GM12878 (cell line): ENCODE measurements at regions of chr5 and their contacts with region 1.

Region 1: DNA sequence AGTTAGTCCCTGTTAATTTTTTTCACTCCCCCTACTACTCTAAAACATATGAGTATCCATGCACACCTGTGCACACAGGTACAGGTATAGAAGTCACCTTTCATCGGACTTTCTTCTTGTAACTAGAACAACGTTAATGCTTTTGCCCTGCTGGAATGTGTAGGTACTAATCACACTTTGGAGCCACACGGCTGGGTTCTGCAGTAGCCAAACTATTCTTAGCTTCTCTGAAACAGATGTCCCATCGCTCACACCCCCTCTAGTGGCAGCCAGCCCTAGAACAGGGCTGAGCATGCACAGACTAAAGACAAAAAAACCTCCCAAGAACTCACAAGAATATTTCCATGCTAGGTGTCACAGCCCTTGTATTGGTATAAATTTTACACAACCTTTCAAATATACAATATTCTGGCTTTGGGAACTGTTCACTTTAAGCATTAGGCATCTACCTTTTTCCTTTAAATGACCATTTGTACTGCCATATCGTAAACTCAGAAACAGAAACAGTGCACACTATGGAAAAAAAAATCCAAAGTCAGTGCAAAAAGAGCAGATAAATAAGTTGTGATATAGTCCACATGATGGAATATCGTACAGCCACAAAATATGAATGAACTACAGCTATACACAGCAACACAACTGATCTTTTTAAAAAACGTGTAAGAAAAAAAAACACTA is 64.0 kb downstream of the RETREG1 start:
- DNase-seq: no peak
- ATAC-seq: peak; percentile 89
- H3K4me3 ChIP-seq: no peak overlapping the region
- H3K27ac ChIP-seq: no peak overlapping the region
- H3K4me1 ChIP-seq: no peaks in the 10 kb centered on the region
- H3K27me3 ChIP-seq: no peaks in the 10 kb centered on the region
- CTCF ChIP-seq: peak; percentile 67 to 90 (median 81)
- EP300 ChIP-seq: no peak
- POLR2A ChIP-seq: no peak
- RAD21 ChIP-seq: peak; percentile 51

Region 2: DNA sequence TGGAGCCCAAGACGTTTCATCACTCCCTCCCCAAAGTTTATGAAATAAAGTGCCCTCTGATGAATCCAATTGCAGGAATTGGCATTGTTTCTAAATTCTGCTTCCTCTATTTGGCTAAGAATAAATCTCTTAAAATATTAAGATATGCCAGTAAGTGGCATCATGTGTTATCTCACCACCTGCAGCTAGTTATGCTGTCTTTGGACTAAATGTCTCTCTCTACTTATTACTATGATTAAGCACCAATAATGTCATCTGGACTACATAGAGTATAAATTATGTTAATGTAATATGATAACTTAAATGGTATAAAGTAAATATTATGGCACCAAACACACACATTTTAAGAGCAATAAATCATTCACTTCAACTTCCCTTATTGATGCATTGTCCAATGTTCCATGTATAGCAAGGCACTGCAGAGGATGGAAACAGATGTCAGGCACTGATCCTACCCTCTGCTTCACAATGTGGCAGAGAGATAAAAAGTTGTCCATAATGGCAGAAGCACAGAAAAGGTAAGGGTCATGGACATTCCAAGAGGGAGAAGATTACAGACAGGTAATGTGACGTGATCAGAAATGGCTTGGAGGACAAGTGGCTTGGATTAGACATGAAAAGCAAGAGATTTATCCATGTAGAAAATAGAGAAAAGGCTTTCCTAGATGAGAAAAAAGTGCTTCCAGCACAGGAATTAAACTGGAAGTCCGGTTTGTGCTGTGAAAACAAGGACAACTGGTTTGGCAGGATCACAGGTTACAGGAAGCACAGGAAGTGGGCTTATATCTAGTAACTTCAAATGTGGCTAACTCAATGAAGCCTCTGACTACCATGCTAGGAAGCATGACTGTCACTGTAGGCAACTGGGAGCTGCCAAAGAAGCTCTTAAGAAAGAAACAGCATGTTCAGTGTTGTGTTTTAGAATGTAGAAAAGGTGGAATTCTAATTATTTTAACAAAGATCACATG is 399.9 kb before region 1 on chr5:
- CTCF ChIA-PET with region 1: interaction called, 3 read pairs
- POLR2A ChIA-PET with region 1: no interaction called
- RAD21 ChIA-PET with region 1: no interaction called
- SMC1A ChIA-PET with region 1: no interaction called
- in situ Hi-C with region 1: loop called (anchors 10 kb)
- intact Hi-C with region 1: no loop called
- DNase-seq: no peak
- ATAC-seq: no peak
- H3K4me3 ChIP-seq: no peak overlapping the region
- H3K27ac ChIP-seq: no peak overlapping the region
- H3K4me1 ChIP-seq: no peaks in the 10 kb centered on the region
- H3K27me3 ChIP-seq: no peaks in the 10 kb centered on the region
- CTCF ChIP-seq: no peak
- EP300 ChIP-seq: no peak
- POLR2A ChIP-seq: no peak
- RAD21 ChIP-seq: no peak

Region 3: DNA sequence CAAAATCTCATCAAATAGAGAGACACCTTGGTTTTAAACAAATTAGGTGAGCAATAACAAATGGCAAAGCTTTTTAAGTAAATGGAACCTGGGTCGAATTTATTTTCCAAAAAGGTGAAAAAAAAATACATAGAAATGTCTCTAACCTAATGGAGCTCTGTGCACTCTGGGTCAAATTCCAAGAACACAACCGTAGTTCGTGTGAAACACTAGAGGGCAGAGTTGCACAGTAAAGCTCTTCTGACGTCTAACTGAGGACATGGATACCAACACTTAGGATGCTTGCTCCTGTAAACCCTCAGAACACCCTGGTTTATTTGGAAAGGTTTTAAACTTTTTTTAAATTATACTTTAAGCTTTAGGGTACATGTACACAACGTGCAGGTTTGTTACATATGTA is 392.1 kb before region 1 on chr5:
- CTCF ChIA-PET with region 1: interaction called, 55 read pairs
- POLR2A ChIA-PET with region 1: no interaction called
- RAD21 ChIA-PET with region 1: interaction called, 17 read pairs
- SMC1A ChIA-PET with region 1: interaction called, 8 read pairs
- in situ Hi-C with region 1: loop called (anchors 10 kb)
- intact Hi-C with region 1: loop called (anchors 1 kb)
- DNase-seq: peak; percentile 2
- ATAC-seq: peak; percentile 96
- H3K4me3 ChIP-seq: no peak overlapping the region
- H3K27ac ChIP-seq: no peak overlapping the region
- H3K4me1 ChIP-seq: no peaks in the 10 kb centered on the region
- H3K27me3 ChIP-seq: no peaks in the 10 kb centered on the region
- CTCF ChIP-seq: peak; percentile 66 to 70 (median 68)
- EP300 ChIP-seq: no peak
- POLR2A ChIP-seq: no peak
- RAD21 ChIP-seq: peak; percentile 83

Region 4: GRCh38 chr5:16392718-16393117 is 160.1 kb before region 1 on chr5:
- CTCF ChIA-PET with region 1: no interaction called
- POLR2A ChIA-PET with region 1: no interaction called
- RAD21 ChIA-PET with region 1: no interaction called
- SMC1A ChIA-PET with region 1: no interaction called
- in situ Hi-C with region 1: no loop called
- intact Hi-C with region 1: no loop called
- DNase-seq: no peak
- ATAC-seq: no peak
- H3K4me3 ChIP-seq: no peak overlapping the region
- H3K27ac ChIP-seq: no peak overlapping the region
- H3K4me1 ChIP-seq: no peaks in the 10 kb centered on the region
- H3K27me3 ChIP-seq: no peaks in the 10 kb centered on the region
- CTCF ChIP-seq: no peak
- EP300 ChIP-seq: no peak
- POLR2A ChIP-seq: no peak
- RAD21 ChIP-seq: no peak

Region 5: GRCh38 chr5:16489322-16489791 is 63.4 kb before region 1 on chr5:
- CTCF ChIA-PET with region 1: interaction called, 17 read pairs
- POLR2A ChIA-PET with region 1: no interaction called
- RAD21 ChIA-PET with region 1: no interaction called
- SMC1A ChIA-PET with region 1: interaction called, 4 read pairs
- in situ Hi-C with region 1: no loop called
- intact Hi-C with region 1: loop called (anchors 1 kb)
- DNase-seq: no peak
- ATAC-seq: peak; percentile 82
- H3K4me3 ChIP-seq: no peak overlapping the region
- H3K27ac ChIP-seq: no peak overlapping the region
- H3K4me1 ChIP-seq: no peaks in the 10 kb centered on the region
- H3K27me3 ChIP-seq: no peaks in the 10 kb centered on the region; a peak in 1 of 4 replicates
- CTCF ChIP-seq: peak; percentile 33 to 49 (median 35); a peak in 5 of 6 replicates
- EP300 ChIP-seq: no peak
- POLR2A ChIP-seq: no peak
- RAD21 ChIP-seq: peak; percentile 73

Region 6: GRCh38 chr5:16515532-16515931 is 37.3 kb before region 1 on chr5:
- CTCF ChIA-PET with region 1: no interaction called
- POLR2A ChIA-PET with region 1: no interaction called
- RAD21 ChIA-PET with region 1: no interaction called
- SMC1A ChIA-PET with region 1: no interaction called
- in situ Hi-C with region 1: no loop called
- intact Hi-C with region 1: no loop called
- DNase-seq: no peak
- ATAC-seq: no peak
- H3K4me3 ChIP-seq: no peak overlapping the region
- H3K27ac ChIP-seq: no peak overlapping the region
- H3K4me1 ChIP-seq: no peaks in the 10 kb centered on the region
- H3K27me3 ChIP-seq: no peaks in the 10 kb centered on the region
- CTCF ChIP-seq: no peak
- EP300 ChIP-seq: no peak
- POLR2A ChIP-seq: no peak
- RAD21 ChIP-seq: no peak

Region 7: DNA sequence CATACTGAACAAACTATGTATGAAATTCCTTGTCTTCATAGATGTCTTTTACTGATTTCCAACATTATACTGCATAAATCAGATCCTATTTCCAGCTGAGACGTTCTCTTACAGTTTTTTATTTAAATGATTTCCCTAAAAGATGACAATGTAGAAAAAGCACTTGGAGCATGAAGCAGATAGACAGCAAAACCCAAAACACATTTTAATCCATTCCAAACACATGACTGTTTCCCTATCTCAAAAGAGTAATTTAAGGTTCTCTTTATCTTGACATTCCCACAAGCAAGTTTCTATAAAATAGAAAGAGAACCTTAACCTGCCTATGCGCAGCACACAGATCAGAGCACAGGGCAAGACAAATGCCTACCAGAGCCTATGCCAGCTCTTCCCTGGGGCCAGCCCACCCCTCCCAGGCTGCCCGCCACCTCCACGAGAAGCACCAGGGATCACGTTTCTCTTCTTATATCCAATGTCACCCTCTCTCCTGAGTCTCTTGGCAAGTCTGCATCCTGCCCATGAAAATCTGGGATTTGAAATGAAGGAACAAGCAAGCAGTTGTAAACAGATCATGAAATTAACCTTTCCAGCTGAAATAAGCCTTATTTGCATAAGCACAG is 11.6 kb after region 1 on chr5:
- CTCF ChIA-PET with region 1: interaction called, 22 read pairs
- POLR2A ChIA-PET with region 1: no interaction called
- RAD21 ChIA-PET with region 1: no interaction called
- SMC1A ChIA-PET with region 1: interaction called, 3 read pairs
- in situ Hi-C with region 1: no loop called
- intact Hi-C with region 1: no loop called
- DNase-seq: no peak
- ATAC-seq: no peak
- H3K4me3 ChIP-seq: no peak overlapping the region
- H3K27ac ChIP-seq: no peak overlapping the region
- H3K4me1 ChIP-seq: no peaks in the 10 kb centered on the region
- H3K27me3 ChIP-seq: no peaks in the 10 kb centered on the region
- CTCF ChIP-seq: no peak
- EP300 ChIP-seq: no peak
- POLR2A ChIP-seq: no peak
- RAD21 ChIP-seq: no peak